Stomach (tissue), 19 donors: ENCODE measurements at regions of chr5 and their contacts with region 1.

Region 1: GRCh38 chr5:38441453-38442246 is 114.8 kb downstream of the LIFR start:
- DNase-seq: peak; percentile 92 to 96
- H3K4me3 ChIP-seq: no peak overlapping the region
- H3K27ac ChIP-seq: no peak overlapping the region
- H3K4me1 ChIP-seq: peaks cover 0 to 8% (median 3%) of the 10 kb centered on the region in 4 donors
- H3K27me3 ChIP-seq: peaks cover 0 to 8% (median 0%) of the 10 kb centered on the region in 3 donors
- CTCF ChIP-seq: peak in 5 of 7 experiments; percentile 88 to 95 (median 91)
- EP300 ChIP-seq: no peak
- POLR2A ChIP-seq: no peak

Region 2: DNA sequence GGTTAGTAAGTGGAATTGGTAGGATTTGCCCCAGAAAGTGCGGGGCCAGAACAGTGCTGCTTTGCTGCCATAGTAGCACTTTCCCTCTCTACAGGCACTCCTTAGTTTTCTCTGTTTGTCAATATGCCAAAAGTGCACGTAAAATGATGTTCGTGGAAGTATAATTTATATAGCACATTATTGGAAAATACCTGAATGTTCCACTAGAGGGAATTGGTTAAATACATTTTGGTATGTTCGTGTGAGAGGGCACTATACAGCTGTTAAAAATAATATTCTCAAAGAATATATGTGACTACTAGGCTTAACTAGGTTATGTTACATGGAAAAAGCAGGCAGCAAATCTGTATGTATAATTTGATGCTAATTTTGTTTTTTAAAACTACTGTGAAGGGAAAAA is 417.9 kb before region 1 on chr5:
- intact Hi-C with region 1: no loop called
- DNase-seq: no peak
- H3K4me3 ChIP-seq: no peak overlapping the region
- H3K27ac ChIP-seq: no peak overlapping the region
- H3K4me1 ChIP-seq: no peaks in the 10 kb centered on the region
- H3K27me3 ChIP-seq: no peaks in the 10 kb centered on the region
- CTCF ChIP-seq: no peak
- EP300 ChIP-seq: no peak
- POLR2A ChIP-seq: no peak

Region 3: GRCh38 chr5:38666668-38667498 is 225.2 kb after region 1 on chr5:
- intact Hi-C with region 1: loop called (anchors 10 kb)
- DNase-seq: peak; percentile 68 to 72
- H3K4me3 ChIP-seq: no peak overlapping the region
- H3K27ac ChIP-seq: peak overlapping the region; percentile 38 to 72 (median 52)
- H3K4me1 ChIP-seq: peaks cover 11 to 18% (median 14%) of the 10 kb centered on the region in 4 donors
- H3K27me3 ChIP-seq: no peaks in the 10 kb centered on the region
- CTCF ChIP-seq: peak in 5 of 7 experiments; percentile 52 to 93 (median 75)
- EP300 ChIP-seq: no peak
- POLR2A ChIP-seq: no peak

Region 4: DNA sequence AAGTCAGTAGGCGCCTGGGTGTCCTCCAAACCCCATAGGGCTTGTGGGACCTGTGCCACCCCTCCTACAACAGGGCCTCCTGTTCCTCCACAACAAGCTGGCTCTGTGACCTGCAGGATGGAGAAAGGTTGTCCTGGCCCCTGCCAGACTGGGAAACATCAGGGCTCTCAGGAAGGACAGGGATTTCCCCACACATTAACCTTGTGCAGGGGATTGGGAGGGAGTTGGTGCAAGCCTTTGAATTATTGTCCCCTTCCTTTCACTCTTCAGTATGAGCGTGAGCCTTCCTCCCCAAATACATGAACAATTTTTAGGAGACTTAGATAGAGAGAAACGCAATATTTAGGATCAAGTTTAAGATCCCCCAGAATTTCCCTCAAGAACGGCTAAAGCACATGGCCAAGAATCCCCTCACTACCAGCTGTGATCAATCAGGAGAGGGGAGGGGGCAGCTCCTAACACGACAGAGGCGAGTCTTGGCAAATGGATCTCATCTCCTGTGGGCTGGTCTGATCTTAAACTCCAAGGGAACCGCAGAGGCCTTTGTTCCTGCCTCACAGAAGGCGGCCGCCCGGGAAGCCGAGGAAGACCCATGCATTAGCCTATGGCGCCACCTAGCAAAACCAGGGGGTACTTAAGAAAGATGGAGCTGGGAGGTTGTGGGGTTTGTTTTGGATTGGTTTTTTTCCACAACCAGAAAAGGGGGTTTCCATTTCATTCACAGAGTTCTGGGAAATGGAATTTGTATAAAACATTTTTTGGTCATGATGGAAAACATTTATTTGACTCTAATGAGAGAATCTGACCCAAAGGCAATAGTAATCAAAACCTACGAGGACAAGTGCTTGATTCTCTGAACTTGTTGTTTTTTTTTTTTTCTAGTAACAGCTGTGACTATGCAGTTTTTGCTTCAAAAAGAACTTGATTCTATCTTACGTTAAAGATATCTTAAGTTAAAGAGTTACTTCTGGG is 368.0 kb after region 1 on chr5:
- intact Hi-C with region 1: loop called (anchors 10 kb)
- DNase-seq: peak; percentile 85 to 96
- H3K4me3 ChIP-seq: no peak overlapping the region
- H3K27ac ChIP-seq: peak overlapping the region in 3 of 5 donors; percentile 9 to 71 (median 51)
- H3K4me1 ChIP-seq: peaks cover 0 to 28% (median 12%) of the 10 kb centered on the region in 4 donors
- H3K27me3 ChIP-seq: peaks cover 0 to 4% (median 0%) of the 10 kb centered on the region in 3 donors
- CTCF ChIP-seq: peak in 5 of 7 experiments; percentile 63 to 86 (median 80)
- EP300 ChIP-seq: no peak
- POLR2A ChIP-seq: no peak